Stomach (tissue), 19 donors: ENCODE measurements at regions of chr15 and their contacts with region 1.

Region 1: DNA sequence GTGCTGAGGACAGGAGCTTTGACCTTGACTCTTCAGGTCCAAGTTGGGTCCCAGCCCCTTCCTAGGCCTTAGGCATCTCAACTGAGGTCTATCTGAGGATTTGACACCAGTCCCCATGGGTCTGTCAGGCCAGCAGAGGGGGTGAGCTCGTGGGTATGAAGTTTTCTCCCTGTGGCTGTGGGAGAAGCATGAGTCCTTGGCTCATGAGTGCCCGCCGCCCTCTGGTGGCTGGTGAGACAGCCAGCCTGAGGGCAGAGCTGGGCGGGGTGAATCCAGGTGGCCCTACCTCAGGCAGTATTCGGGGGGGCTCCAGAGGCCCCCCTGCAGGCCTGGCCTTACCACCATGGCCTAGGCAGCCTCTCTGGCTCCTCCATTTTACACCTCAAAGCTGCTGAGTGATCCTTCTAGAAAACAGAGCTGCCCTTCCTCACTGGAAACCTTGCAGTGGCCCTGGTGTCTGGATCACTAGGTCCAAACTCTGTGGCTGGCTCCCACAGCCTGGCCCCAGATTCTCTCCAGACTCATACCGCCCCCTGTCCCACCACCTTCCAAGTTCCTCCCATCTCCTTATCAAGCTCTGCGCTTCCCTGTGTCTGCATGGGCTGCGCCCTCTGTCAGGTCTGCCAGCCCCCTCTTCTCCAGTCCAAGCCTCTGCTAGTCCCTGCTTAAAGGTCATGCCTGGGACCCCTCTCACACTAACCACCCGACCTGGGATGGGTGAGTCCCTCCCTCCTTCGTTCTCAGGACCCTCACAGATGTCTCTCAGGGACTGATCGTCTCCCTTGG is 16.1 kb downstream of the SH2D7 start:
- DNase-seq: peak; percentile 89 to 94
- H3K4me3 ChIP-seq: no peak overlapping the region
- H3K27ac ChIP-seq: no peak overlapping the region
- H3K4me1 ChIP-seq: peaks cover 0 to 36% (median 6%) of the 10 kb centered on the region in 4 donors
- H3K27me3 ChIP-seq: no peaks in the 10 kb centered on the region
- CTCF ChIP-seq: peak in 6 of 7 experiments; percentile 5 to 99 (median 90)
- EP300 ChIP-seq: no peak
- POLR2A ChIP-seq: no peak

Region 2: GRCh38 chr15:77966540-77967290 is 141.8 kb before region 1 on chr15:
- intact Hi-C with region 1: loop called (anchors 5 kb)
- DNase-seq: peak in 1 of 2 donors; percentile 69
- H3K4me3 ChIP-seq: no peak overlapping the region
- H3K27ac ChIP-seq: no peak overlapping the region
- H3K4me1 ChIP-seq: no peaks in the 10 kb centered on the region
- H3K27me3 ChIP-seq: no peaks in the 10 kb centered on the region
- CTCF ChIP-seq: peak in 4 of 7 experiments; percentile 62 to 79 (median 71)
- EP300 ChIP-seq: no peak
- POLR2A ChIP-seq: no peak

Region 3: GRCh38 chr15:78000091-78000926 is 108.2 kb before region 1 on chr15:
- intact Hi-C with region 1: loop called (anchors 5 kb)
- DNase-seq: peak; percentile 93 to 97
- H3K4me3 ChIP-seq: no peak overlapping the region
- H3K27ac ChIP-seq: peak overlapping the region in 4 of 5 donors; percentile 26 to 58 (median 46)
- H3K4me1 ChIP-seq: peaks cover 26 to 54% (median 47%) of the 10 kb centered on the region in 4 donors
- H3K27me3 ChIP-seq: no peaks in the 10 kb centered on the region
- CTCF ChIP-seq: peak in 5 of 7 experiments; percentile 49 to 93 (median 74)
- EP300 ChIP-seq: no peak
- POLR2A ChIP-seq: no peak

Region 4: GRCh38 chr15:78195735-78196201 is 87.3 kb after region 1 on chr15:
- intact Hi-C with region 1: loop called (anchors 5 kb)
- DNase-seq: peak; percentile 50 to 69
- H3K4me3 ChIP-seq: no peak overlapping the region
- H3K27ac ChIP-seq: no peak overlapping the region
- H3K4me1 ChIP-seq: no peaks in the 10 kb centered on the region
- H3K27me3 ChIP-seq: peaks cover 0 to 6% (median 0%) of the 10 kb centered on the region in 3 donors
- CTCF ChIP-seq: peak in 5 of 7 experiments; percentile 49 to 76 (median 65)
- EP300 ChIP-seq: no peak
- POLR2A ChIP-seq: no peak

Region 5: GRCh38 chr15:78229431-78230406 is 121.2 kb after region 1 on chr15:
- intact Hi-C with region 1: no loop called
- DNase-seq: no peak
- H3K4me3 ChIP-seq: no peak overlapping the region
- H3K27ac ChIP-seq: no peak overlapping the region
- H3K4me1 ChIP-seq: no peaks in the 10 kb centered on the region
- H3K27me3 ChIP-seq: peaks cover 0 to 5% (median under 1%) of the 10 kb centered on the region in 3 donors
- CTCF ChIP-seq: no peak
- EP300 ChIP-seq: no peak
- POLR2A ChIP-seq: no peak

Region 6: DNA sequence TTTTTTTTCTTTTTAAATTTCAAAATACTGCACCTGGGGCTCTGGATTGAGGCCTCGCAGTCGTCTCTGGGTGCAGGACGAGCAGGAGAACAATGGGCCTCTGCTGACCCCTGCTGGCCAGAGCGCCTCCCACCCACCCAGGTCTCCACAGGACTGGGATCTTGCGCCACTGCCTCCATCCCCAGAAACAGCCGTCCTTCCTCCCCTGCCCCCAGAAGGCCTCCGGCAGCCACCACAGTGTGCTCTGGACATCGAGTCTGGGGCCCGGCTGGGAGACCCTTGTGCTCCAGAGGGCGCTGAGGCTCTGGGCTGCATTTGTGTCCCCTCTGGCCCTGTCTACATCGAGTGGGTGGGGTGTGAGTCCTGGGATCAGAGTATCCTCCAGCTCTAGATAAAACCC is 132.5 kb after region 1 on chr15:
- intact Hi-C with region 1: loop called (anchors 5 kb)
- DNase-seq: peak; percentile 91 to 93
- H3K4me3 ChIP-seq: no peak overlapping the region
- H3K27ac ChIP-seq: no peak overlapping the region
- H3K4me1 ChIP-seq: peaks cover 0 to 20% (median 14%) of the 10 kb centered on the region in 4 donors
- H3K27me3 ChIP-seq: peaks cover 0 to 6% (median 0%) of the 10 kb centered on the region in 3 donors
- CTCF ChIP-seq: peak in 5 of 7 experiments; percentile 70 to 92 (median 83)
- EP300 ChIP-seq: no peak
- POLR2A ChIP-seq: no peak